Naive thymus-derived CD4-positive, alpha-beta T cell (primary cell): ENCODE measurements at regions of chr2 and their contacts with region 1.

Region 1: DNA sequence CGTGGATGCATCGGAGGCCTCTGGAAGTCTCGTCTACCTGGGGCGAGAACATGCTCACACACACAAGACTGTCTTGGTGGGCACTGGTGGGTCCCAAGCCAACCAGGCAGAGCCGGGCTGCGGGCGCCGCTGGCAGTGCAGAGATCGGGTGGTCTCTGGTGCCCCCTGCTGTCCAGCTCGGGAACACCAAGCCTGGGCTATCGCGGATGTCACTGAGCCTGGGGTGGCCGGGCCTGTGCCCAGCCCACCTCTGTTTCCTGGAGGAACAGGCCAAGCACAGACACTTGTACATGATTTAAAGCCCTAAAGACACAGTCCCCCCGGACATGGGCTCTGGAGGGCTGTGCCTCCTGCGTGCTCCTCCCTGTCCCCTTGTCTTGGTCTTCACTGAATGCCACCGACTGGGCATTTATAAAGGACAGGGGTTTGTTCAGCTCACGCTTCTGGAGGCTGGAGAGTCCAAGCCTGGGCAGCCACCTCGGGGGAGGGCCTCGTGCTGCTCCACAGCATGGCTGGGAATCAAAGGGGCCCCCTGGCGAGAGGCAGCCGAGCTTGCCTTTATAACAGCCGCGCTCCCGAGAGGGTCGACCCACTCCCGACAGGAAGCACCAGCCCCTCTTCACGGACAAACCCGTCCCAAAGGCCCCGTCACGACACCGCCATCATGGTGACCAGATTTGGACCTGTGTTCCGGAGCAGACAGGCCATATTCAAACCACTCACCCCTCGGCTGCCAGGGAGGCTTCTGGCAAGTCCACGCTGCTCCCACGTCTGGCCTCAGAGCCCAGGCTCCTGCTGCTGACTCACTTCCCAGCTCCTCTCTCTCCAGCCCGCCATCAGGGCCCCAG is 3.6 kb upstream of the OTOS start:
- DNase-seq: peak; percentile 63 to 89 (median 77)
- ATAC-seq: peak; percentile 92
- H3K4me3 ChIP-seq: no peak overlapping the region
- H3K4me3 Mint-ChIP-seq: peak overlapping the region in 1 of 10 donors; percentile 47
- H3K27ac ChIP-seq: no peak overlapping the region
- H3K27ac Mint-ChIP-seq: no peak overlapping the region
- H3K4me1 ChIP-seq: peaks cover 0 to 3% of the 10 kb centered on the region in 2 donors
- H3K4me1 Mint-ChIP-seq: peaks cover 0 to 2% (median 0%) of the 10 kb centered on the region in 7 donors
- H3K27me3 ChIP-seq: no peaks in the 10 kb centered on the region
- H3K27me3 Mint-ChIP-seq: peaks cover 0 to 8% (median 3%) of the 10 kb centered on the region in 5 donors

Region 2: GRCh38 chr2:238370823-238371372 is 1773.1 kb before region 1 on chr2:
- CTCF ChIA-PET with region 1: no interaction called
- POLR2A ChIA-PET with region 1: no interaction called
- intact Hi-C with region 1: loop called in 1 of 2 experiments (anchors 5 kb)
- DNase-seq: peak in 8 of 9 donors; percentile 27 to 58 (median 44)
- ATAC-seq: peak; percentile 89
- H3K4me3 ChIP-seq: no peak overlapping the region
- H3K4me3 Mint-ChIP-seq: peak overlapping the region in 1 of 10 donors; percentile 13
- H3K27ac ChIP-seq: no peak overlapping the region
- H3K27ac Mint-ChIP-seq: peak overlapping the region in 1 of 9 donors; percentile 53
- H3K4me1 ChIP-seq: no peaks in the 10 kb centered on the region
- H3K4me1 Mint-ChIP-seq: peaks cover 0 to 11% (median 7%) of the 10 kb centered on the region in 7 donors
- H3K27me3 ChIP-seq: no peaks in the 10 kb centered on the region
- H3K27me3 Mint-ChIP-seq: peaks cover 0 to 18% (median 0%) of the 10 kb centered on the region in 5 donors

Region 3: DNA sequence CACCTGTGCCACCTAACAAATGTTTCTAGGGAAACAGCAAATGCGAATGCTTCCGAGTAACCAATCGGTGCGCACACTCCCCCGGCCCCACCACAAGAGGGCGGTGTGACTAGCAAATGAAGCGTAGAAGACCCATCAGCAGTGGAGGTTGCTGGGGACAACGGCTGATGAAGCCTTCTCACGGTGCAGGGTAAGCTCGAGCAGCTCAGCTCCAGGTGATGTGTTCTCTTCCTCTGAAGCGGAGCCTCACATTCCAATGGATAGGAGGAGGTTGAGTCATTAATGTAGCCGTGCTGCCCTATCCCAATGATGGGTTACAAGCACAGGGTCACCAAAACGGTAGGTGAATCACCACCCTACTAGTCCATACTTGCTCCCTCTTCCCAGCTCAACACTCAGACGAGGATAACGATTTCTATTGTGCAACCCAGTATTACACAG is 1423.8 kb before region 1 on chr2:
- CTCF ChIA-PET with region 1: no interaction called
- POLR2A ChIA-PET with region 1: no interaction called
- intact Hi-C with region 1: loop called in 1 of 2 experiments (anchors 10 kb)
- DNase-seq: peak in 4 of 9 donors; percentile 5 to 57 (median 16)
- ATAC-seq: peak; percentile 61
- H3K4me3 ChIP-seq: no peak overlapping the region
- H3K4me3 Mint-ChIP-seq: no peak overlapping the region
- H3K27ac ChIP-seq: no peak overlapping the region
- H3K27ac Mint-ChIP-seq: no peak overlapping the region
- H3K4me1 ChIP-seq: no peaks in the 10 kb centered on the region
- H3K4me1 Mint-ChIP-seq: no peaks in the 10 kb centered on the region
- H3K27me3 ChIP-seq: no peaks in the 10 kb centered on the region
- H3K27me3 Mint-ChIP-seq: peaks cover 3 to 40% (median 32%) of the 10 kb centered on the region in 5 donors

Region 4: DNA sequence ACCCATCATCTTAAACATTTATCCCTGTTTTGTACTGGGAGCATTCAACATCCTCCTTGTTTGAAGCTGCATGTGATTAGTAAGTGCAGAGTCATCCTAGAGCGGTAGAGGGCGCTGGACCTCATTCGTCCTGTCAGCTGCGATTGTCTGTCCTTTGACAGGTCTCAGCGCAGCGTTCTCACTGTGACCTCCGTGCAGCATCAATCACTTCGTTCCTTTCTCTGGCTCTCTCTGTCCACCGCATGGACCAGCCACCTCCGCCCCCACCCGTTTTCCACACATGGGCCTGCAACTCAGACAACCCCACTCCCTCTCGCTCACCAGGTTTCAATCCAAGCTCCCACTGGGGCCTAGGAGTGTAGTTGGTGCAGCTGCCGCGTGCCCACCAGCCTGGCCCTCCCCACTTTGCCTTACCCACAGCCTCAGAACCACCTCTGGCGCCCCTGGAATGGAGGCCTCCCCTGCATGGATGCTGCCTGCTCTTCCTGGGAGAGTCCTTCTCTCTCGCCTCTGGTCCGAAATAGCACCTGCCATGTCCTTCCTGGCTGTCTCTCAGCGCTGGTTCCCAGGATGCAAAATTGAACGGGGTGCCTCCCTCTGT is 209.4 kb before region 1 on chr2:
- CTCF ChIA-PET with region 1: no interaction called
- POLR2A ChIA-PET with region 1: no interaction called
- intact Hi-C with region 1: loop called in 1 of 2 experiments (anchors 5 kb)
- DNase-seq: peak; percentile 20 to 55 (median 43)
- ATAC-seq: peak; percentile 80
- H3K4me3 ChIP-seq: no peak overlapping the region
- H3K4me3 Mint-ChIP-seq: peak overlapping the region in 3 of 10 donors; percentile 29 to 76 (median 42)
- H3K27ac ChIP-seq: no peak overlapping the region
- H3K27ac Mint-ChIP-seq: peak overlapping the region in 1 of 9 donors; percentile 64
- H3K4me1 ChIP-seq: no peaks in the 10 kb centered on the region
- H3K4me1 Mint-ChIP-seq: peaks cover 5 to 9% (median 7%) of the 10 kb centered on the region in 7 donors
- H3K27me3 ChIP-seq: no peaks in the 10 kb centered on the region
- H3K27me3 Mint-ChIP-seq: peaks cover 0 to 12% (median 0%) of the 10 kb centered on the region in 5 donors

Region 5: DNA sequence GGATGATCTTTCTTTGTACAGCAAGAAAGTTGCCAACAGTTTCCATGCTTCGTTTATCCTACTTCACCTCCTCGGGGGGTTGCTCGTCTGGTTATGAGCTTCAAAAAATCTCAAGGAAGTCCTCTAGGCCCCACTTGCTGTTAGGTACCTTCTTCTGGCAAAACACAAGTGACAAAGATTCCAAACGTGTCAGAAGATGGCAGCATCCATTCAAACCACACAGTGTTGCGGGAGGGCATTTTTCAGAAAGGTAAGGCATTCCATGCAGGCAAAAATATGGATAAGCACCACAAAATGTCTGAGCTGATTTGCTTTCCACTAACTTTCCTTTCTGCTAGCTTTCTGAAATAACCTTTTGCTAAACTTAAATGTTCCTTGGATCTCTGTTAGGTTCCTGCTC is 77.5 kb before region 1 on chr2:
- CTCF ChIA-PET with region 1: interaction called, 81 read pairs
- POLR2A ChIA-PET with region 1: interaction called, 4 read pairs
- intact Hi-C with region 1: loop called (anchors 1 kb)
- DNase-seq: no peak
- ATAC-seq: no peak
- H3K4me3 ChIP-seq: no peak overlapping the region
- H3K4me3 Mint-ChIP-seq: no peak overlapping the region
- H3K27ac ChIP-seq: no peak overlapping the region
- H3K27ac Mint-ChIP-seq: no peak overlapping the region
- H3K4me1 ChIP-seq: no peaks in the 10 kb centered on the region
- H3K4me1 Mint-ChIP-seq: no peaks in the 10 kb centered on the region
- H3K27me3 ChIP-seq: peaks cover 0 to 2% of the 10 kb centered on the region in 2 donors
- H3K27me3 Mint-ChIP-seq: peaks cover 14 to 56% (median 25%) of the 10 kb centered on the region in 5 donors

Region 6: DNA sequence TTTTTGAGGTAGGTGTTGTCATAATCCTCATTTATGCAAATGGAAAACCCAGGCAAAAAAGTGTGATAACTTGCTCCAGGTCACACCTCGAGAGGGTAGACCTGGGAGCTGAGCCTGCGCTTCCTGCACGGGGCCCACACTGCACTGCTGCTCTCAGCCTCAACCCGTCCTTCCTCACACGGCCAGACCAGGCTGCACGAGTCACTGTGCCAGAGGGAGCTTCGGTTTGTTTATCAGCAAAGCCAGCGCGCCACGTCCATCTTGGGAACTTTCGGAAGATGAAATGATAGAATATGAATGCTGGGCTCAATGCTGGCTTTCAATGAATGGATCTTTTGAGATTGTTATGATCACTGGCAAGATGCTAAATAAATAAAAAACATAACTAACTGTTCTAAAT is 22.4 kb before region 1 on chr2:
- CTCF ChIA-PET with region 1: no interaction called
- POLR2A ChIA-PET with region 1: no interaction called
- intact Hi-C with region 1: no loop called
- DNase-seq: no peak
- ATAC-seq: no peak
- H3K4me3 ChIP-seq: no peak overlapping the region
- H3K4me3 Mint-ChIP-seq: no peak overlapping the region
- H3K27ac ChIP-seq: no peak overlapping the region
- H3K27ac Mint-ChIP-seq: no peak overlapping the region
- H3K4me1 ChIP-seq: no peaks in the 10 kb centered on the region
- H3K4me1 Mint-ChIP-seq: peaks cover 0 to 4% (median 0%) of the 10 kb centered on the region in 7 donors
- H3K27me3 ChIP-seq: no peaks in the 10 kb centered on the region
- H3K27me3 Mint-ChIP-seq: peaks cover 0 to 13% (median 0%) of the 10 kb centered on the region in 5 donors